ENCODE measurements at regions of chr6 and their contacts with region 1.

Region 1: GRCh38 chr6:134517145-134517658 is 199.3 kb upstream of the SGK1 start:
- DNase-seq: peak; percentile 34 to 57 (median 50)
- H3K4me3 ChIP-seq: no peak overlapping the region
- H3K4me3 Mint-ChIP-seq: peak overlapping the region in 1 of 2 donors; percentile 7
- H3K27ac ChIP-seq: peak overlapping the region in 1 of 2 donors; percentile 64
- H3K27ac Mint-ChIP-seq: peak overlapping the region; percentile 73 to 92 (median 88)
- H3K4me1 ChIP-seq: peaks cover 33 to 40% of the 10 kb centered on the region in 2 donors
- H3K4me1 Mint-ChIP-seq: peaks cover 50% of the 10 kb centered on the region
- H3K27me3 ChIP-seq: no peaks in the 10 kb centered on the region
- H3K27me3 Mint-ChIP-seq: no peaks in the 10 kb centered on the region
- CTCF ChIP-seq: no peak

Region 2: GRCh38 chr6:134453870-134454510 is 63.2 kb before region 1 on chr6:
- intact Hi-C with region 1: loop called in 1 of 2 experiments (anchors 5 kb)
- DNase-seq: no peak
- H3K4me3 ChIP-seq: no peak overlapping the region
- H3K4me3 Mint-ChIP-seq: no peak overlapping the region
- H3K27ac ChIP-seq: no peak overlapping the region
- H3K27ac Mint-ChIP-seq: no peak overlapping the region
- H3K4me1 ChIP-seq: peaks cover 7% of the 10 kb centered on the region in 2 donors
- H3K4me1 Mint-ChIP-seq: peaks cover 11% of the 10 kb centered on the region
- H3K27me3 ChIP-seq: no peaks in the 10 kb centered on the region
- H3K27me3 Mint-ChIP-seq: no peaks in the 10 kb centered on the region
- CTCF ChIP-seq: no peak

Measured in CD14-positive monocyte (primary cell).